ENCODE measurements at regions of chr7 and their contacts with region 1.

Region 1: DNA sequence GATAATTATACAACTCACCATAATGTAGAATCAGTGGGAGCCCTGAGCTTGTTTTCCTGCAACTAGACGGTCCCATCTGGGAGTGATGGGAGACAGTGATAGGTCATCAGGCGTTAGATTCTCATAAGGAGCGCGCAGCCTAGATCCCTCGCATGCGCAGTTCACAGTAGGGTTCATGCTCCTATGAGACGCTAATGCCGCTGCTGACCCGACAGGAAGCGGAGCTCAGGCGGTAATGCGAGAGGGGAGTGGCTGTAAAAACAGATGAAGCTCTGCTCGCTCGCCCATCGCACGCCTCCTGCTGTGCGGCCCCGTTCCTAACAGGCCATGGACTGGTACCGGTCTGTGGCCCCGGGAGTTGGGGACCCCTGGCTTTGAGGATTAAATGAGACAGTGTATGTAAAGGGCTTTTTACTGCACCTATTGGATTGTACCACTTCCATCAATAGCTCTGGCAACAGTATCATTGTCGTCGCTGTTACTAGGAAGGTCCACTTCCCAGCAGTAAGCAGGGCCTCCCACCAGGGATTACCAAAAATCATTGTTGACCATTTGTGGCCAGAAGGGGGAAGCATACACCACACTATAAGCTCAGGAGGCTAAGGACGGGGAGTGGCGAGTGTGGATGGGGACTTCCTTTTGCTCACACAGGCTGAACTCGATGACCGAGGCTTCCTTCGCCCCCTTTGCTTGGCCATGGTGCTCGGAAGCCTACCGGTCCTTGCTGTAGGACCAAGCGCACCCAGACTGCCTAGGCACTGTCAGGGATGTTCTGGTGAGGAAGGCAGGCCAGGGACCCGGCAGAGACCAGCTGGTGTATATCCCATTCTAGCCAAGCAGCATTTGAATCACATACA is 26.4 kb downstream of the AKR1B1 start:
- H3K4me3 Mint-ChIP-seq: peak overlapping the region; percentile 70
- H3K27ac Mint-ChIP-seq: peak overlapping the region; percentile 87
- H3K4me1 Mint-ChIP-seq: peaks cover 27% of the 10 kb centered on the region
- H3K27me3 Mint-ChIP-seq: peaks cover 2% of the 10 kb centered on the region

Region 2: DNA sequence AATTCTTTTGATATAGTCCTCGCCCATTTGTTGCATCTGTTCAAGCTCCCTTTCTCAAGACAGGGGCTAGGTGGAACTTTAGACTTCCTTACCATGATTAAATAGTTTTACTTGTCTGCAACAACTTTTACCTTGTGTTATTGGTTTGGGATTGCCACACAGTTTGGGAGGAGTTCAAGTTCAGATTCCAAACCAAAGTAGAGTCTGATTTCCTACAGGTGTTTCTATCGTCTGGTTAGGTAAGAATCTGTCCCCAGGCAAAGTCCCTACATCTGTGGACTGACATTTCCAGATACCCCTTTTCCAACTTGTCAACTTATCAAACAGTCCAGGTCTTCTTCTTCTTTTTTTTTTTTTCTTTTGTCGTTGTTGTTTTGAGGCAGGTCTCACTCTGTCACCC is 212.3 kb before region 1 on chr7:
- intact Hi-C with region 1: no loop called
- H3K4me3 Mint-ChIP-seq: no peak overlapping the region
- H3K27ac Mint-ChIP-seq: no peak overlapping the region
- H3K4me1 Mint-ChIP-seq: no peaks in the 10 kb centered on the region
- H3K27me3 Mint-ChIP-seq: peaks cover 8% of the 10 kb centered on the region

Region 3: DNA sequence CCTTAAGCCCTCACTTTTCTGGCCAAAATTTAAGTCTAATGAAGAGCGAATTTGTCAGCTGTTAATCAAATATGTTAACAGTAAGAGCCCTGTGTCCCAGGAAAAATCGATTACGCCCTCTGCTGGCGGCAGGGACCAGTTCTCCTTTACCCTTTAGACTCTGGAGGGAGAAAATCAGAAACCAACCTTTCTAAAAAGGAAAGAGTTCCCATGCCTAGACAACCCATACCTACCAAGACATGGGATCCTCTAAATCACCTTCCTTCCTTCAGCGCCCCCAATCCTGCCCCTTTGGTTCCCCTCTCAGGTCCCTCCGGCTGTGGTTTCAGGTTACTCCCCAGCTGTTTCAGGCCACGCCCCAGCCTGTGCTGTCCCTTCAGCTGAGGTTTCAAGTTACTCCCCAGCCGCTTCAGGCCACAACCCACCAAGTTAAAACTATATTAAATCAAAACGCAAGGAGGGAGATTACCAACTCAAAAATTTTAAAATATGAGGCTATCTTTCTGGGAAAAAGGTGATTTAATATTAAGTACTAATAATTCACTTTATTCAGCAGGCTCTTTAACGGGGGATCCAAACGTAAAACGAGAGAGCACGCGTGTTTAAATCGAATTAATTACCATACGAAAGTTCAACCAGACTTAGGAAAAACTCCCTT is 115.0 kb after region 1 on chr7:
- intact Hi-C with region 1: loop called (anchors 10 kb)
- H3K4me3 Mint-ChIP-seq: no peak overlapping the region
- H3K27ac Mint-ChIP-seq: no peak overlapping the region
- H3K4me1 Mint-ChIP-seq: peaks cover 4% of the 10 kb centered on the region
- H3K27me3 Mint-ChIP-seq: peaks cover 19% of the 10 kb centered on the region

Region 4: GRCh38 chr7:134605973-134606923 is 173.7 kb after region 1 on chr7:
- intact Hi-C with region 1: loop called (anchors 1 kb)
- H3K4me3 Mint-ChIP-seq: peak overlapping the region; percentile 21
- H3K27ac Mint-ChIP-seq: peak overlapping the region; percentile 45
- H3K4me1 Mint-ChIP-seq: peaks cover 10% of the 10 kb centered on the region
- H3K27me3 Mint-ChIP-seq: peaks cover 5% of the 10 kb centered on the region

Region 5: DNA sequence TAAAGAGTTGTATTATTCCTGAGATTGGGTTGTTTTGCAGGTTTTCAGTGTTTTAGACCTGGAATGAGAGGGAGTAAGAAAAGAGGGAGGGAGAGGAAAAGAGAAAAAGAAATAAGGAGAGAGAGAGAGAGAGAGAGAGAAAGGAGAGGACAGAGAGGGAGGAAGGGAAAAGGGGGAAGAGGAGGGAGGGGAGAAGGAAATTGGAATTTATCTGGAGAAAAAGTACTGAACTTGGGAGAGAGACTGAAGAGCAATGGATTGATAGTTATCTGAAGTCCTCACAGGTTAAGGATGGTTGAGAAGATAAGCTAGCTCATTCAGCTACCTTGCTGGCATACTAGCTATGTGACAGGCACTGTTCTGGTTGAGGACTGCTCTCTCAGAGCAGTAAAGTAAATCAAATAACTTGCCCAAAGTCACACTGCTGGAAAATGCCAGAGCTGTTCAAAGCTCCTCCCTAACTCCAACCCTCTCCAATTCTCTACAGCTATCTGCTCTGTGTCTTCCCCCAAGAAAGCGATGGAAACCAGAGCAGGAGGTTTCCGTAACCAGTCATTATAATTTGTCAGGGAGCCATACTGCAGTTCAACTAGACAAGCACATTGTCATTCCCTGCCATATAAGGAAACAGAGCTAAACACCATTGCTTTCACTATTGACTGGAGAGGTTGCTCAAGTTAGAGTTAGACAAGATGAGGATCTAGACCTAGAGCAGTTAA is 357.6 kb after region 1 on chr7:
- intact Hi-C with region 1: no loop called
- H3K4me3 Mint-ChIP-seq: no peak overlapping the region
- H3K27ac Mint-ChIP-seq: no peak overlapping the region
- H3K4me1 Mint-ChIP-seq: no peaks in the 10 kb centered on the region
- H3K27me3 Mint-ChIP-seq: no peaks in the 10 kb centered on the region

Measured in dendritic cell treated with granulocyte-macrophage colony-stimulating factor and Interleukin-4, amounts not matched to agents 40 ng/mL and 50 ng/mL, for 4 days (primary cell).